Transverse colon (tissue), 4 donors: ENCODE measurements at regions of chr19 and their contacts with region 1.

Region 1: GRCh38 chr19:7197760-7198696 is 96.2 kb downstream of the INSR start:
- DNase-seq: peak; percentile 94
- H3K4me3 ChIP-seq: peak overlapping the region; percentile 64 to 76 (median 73)
- H3K27ac ChIP-seq: peak overlapping the region; percentile 81 to 92 (median 88)
- H3K4me1 ChIP-seq: peaks cover 14 to 46% (median 31%) of the 10 kb centered on the region in 4 donors
- H3K27me3 ChIP-seq: no peaks in the 10 kb centered on the region
- CTCF ChIP-seq: peak; percentile 31 to 74 (median 46)
- EP300 ChIP-seq: no peak
- POLR2A ChIP-seq: peak; percentile 77

Region 2: DNA sequence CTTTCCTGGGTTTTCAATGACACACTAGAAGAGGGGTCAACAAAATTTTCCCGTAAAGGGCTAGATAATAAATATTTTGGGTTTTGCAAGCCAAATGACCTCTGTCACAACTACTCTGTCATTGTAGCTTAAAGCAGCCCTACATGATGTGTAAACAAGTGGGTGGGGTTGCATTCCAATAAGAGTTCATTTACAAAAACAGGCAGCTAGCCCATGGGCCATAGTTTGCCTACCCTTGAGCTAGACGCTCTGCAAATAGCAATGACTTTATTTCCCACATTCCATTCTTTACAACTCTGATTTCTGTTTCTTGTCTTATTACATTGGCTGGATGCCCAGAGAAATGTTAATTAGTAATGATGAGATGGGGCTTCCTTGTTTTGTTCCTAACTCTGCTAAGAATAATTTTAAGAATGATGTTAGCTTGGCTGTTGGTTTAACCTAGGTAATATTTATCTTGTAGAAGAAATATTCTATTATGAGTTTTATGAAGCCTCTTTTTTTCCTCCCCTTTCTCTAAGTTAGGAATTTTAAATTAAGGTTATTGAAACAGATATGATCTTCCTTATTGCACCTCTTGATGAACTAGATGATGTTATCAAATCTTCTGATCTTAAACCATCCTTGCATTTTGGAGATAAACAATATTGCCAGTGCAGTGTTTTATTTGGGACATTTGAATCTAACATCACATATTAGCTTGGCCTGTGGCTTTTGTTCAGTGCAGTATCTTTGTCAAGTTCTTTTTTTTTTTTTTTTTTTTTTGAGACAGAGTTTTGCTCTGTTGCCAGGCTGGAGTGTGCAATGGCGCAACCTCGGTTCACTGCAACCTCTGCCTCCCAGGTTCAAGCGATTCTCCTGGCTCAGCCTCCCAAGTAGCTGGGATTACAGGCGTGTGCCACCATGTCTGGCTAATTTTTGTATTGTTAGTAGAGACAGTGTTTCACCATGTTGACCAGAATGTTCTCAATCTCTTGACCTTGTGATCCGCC is 52.2 kb before region 1 on chr19:
- in situ Hi-C with region 1: no loop called
- intact Hi-C with region 1: loop called (anchors 5 kb)
- DNase-seq: peak; percentile 41
- H3K4me3 ChIP-seq: no peak overlapping the region
- H3K27ac ChIP-seq: peak overlapping the region in 3 of 4 donors; percentile 26 to 49 (median 36)
- H3K4me1 ChIP-seq: peaks cover 0 to 6% (median 0%) of the 10 kb centered on the region in 4 donors
- H3K27me3 ChIP-seq: no peaks in the 10 kb centered on the region
- CTCF ChIP-seq: no peak
- EP300 ChIP-seq: no peak
- POLR2A ChIP-seq: no peak

Region 3: DNA sequence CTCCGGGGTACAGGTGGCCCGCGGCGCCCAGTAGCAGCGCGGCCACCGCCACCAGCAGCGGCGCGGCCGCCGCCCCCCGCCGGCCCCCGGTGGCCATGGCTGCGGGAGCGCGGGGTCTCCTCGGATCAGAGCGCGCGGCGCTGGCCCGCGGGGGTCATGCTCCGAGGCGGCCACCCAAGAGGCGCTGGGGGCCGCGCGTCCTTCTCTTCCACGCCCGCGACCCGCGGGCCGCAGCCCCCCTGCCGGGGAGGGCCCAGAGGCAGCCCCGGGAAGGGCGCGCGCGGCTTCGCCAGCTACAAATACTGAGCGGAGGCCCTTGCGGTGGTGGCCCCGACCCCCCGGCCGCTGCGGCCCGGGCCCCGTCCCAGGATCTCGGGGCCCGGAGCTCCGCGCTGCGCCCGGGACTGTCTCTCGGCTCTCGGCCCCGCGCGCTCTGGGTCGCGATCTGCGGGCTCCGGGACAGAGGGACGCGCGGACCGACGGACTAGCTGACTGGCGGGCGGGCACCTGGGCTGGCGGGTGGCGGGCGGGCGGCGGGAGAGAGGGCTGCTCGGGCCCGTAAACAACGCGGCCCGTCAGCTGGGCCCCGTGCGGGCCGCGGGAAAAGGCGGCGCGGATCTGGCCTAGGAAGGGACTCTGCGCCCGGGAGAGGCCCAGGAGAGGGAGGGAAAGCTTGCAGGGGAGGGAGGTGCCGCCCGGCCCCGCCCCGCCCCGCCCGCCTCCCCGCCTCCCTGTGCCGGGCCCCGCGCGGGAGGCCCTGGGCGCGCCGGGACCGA is 96.0 kb after region 1 on chr19 and contains the start of gene INSR:
- in situ Hi-C with region 1: loop called (anchors 5 to 25 kb)
- intact Hi-C with region 1: loop called (anchors 1 kb)
- DNase-seq: peak; percentile 93
- H3K4me3 ChIP-seq: peak within 1 kb of the TSS; percentile 74 to 100 (median 100)
- H3K27ac ChIP-seq: peak within 1 kb of the TSS; percentile 86 to 98 (median 94)
- H3K4me1 ChIP-seq: peaks cover 7 to 34% (median 24%) of the 10 kb centered on the region in 4 donors
- H3K27me3 ChIP-seq: no peaks in the 10 kb centered on the region
- CTCF ChIP-seq: no peak
- EP300 ChIP-seq: no peak
- POLR2A ChIP-seq: peak; percentile 67
- total RNA-seq, gene INSR: 134 to 252 (median 164) TPM